ENCODE measurements at regions of chr5 and their contacts with region 1.

Region 1: DNA sequence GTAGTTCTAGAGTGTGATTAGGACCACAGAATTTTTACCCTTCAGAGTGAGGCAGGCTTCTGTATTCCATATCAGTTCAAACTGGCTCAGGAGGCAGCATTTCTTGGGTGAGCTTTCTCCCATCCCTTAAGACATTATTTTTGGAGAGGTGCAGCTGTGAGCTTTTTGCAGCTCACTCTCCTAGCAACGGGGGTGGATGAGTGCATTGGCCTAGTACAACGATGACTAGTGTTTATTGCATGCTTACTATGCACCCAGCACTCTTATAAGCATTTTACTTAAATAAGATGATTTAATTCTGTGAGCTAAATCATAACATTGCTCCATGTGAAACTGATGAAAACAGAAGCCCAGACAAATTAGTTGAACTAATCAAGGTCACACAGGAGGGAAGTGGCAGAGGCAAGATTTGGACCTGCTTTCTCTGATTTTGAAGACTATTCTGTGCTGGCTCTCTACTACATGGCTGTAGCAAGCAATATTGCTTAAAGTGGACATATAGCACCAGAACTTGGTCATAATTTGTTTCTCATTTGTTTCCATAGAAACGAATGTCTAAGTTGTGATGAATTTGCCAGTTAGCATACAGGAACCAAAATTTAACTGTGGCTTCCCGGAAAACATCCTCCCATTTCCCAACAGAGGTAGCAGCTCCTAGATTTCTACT is 372.1 kb upstream of the RIOK2 start:
- DNase-seq: no peak
- H3K4me3 ChIP-seq: no peak overlapping the region
- H3K27me3 ChIP-seq: no peaks in the 10 kb centered on the region
- CTCF ChIP-seq: no peak

Region 2: DNA sequence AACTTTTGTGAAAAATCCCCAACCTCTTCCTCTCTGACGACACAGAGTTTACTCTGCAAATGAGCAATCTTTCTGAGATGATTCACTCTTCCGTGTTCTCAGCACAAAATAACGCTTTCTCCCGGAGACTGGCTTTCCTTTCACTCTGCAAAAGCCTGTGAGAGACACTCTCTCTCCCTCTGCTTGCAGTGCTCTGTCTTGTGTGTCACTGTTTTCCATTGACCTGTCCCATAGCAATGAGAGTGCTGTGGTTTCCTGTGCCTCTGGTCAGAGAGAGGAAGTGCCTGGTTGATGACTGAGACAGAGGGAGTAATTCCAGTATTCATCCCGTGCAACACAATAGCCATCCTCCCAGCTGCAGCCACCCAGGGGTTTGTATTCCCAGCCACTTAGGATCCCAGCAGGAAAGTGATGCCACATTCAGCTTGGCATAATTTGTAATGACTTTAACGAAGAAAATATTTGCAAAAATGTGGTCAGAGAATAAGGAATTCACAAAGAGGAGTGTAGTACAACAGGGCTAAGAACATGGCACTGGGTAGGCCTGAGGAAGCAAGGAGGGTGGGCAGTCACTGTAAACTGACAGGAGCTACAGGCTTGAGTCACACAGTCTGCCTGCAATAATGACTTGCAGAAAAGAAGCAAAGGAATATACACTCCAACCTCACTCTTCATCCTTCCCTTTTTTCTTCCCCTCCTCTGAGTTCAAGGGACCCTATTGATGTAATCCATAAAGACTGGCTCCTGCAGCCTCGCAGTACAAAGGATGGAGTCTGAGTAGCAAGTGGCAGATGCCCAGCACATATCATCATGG is 754.9 kb after region 1 on chr5:
- CTCF ChIA-PET with region 1: no interaction called
- POLR2A ChIA-PET with region 1: interaction called, 31 read pairs
- DNase-seq: peak; percentile 95
- H3K4me3 ChIP-seq: peak overlapping the region; percentile 23; the same call in 1 of the 2 replicates
- H3K27me3 ChIP-seq: no peaks in the 10 kb centered on the region
- CTCF ChIP-seq: no peak